ENCODE measurements at regions of chr1 and their contacts with region 1.

Region 1: GRCh38 chr1:76154206-76154956 is 79.8 kb downstream of the ST6GALNAC3 start:
- DNase-seq: peak; percentile 90
- H3K4me3 Mint-ChIP-seq: peak overlapping the region; percentile 72
- H3K27ac Mint-ChIP-seq: peak overlapping the region; percentile 67
- H3K4me1 Mint-ChIP-seq: peaks cover 12% of the 10 kb centered on the region
- H3K27me3 Mint-ChIP-seq: no peaks in the 10 kb centered on the region

Region 2: DNA sequence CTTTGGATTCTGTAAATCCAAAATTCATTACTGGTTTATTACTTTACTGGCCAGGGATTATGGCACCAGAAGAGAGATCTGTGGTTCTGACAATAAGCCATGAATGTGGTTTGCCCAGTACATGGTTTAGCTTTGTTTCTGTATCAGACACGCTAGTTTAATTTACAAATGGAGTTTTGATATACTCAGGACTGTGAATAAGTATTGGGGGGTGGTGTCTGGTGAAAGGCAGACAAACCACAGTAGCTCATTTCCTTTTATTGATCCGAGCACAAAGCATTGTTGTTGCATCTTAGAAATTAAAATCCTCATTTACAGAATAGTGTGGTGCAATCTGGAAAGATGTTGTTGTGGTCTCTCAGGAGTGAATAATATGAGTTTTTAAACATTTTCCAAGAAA is 16.1 kb after region 1 on chr1:
- CTCF ChIA-PET with region 1: interaction called, 12 read pairs
- intact Hi-C with region 1: no loop called
- DNase-seq: no peak
- H3K4me3 Mint-ChIP-seq: no peak overlapping the region
- H3K27ac Mint-ChIP-seq: no peak overlapping the region
- H3K4me1 Mint-ChIP-seq: peaks cover 12% of the 10 kb centered on the region
- H3K27me3 Mint-ChIP-seq: no peaks in the 10 kb centered on the region

Region 3: GRCh38 chr1:76294482-76295194 is 140.3 kb after region 1 on chr1:
- CTCF ChIA-PET with region 1: interaction called, 7 read pairs
- intact Hi-C with region 1: loop called (anchors 1 kb)
- DNase-seq: peak; percentile 30
- H3K4me3 Mint-ChIP-seq: peak overlapping the region; percentile 49
- H3K27ac Mint-ChIP-seq: peak overlapping the region; percentile 73
- H3K4me1 Mint-ChIP-seq: peaks cover 76% of the 10 kb centered on the region
- H3K27me3 Mint-ChIP-seq: no peaks in the 10 kb centered on the region

Region 4: DNA sequence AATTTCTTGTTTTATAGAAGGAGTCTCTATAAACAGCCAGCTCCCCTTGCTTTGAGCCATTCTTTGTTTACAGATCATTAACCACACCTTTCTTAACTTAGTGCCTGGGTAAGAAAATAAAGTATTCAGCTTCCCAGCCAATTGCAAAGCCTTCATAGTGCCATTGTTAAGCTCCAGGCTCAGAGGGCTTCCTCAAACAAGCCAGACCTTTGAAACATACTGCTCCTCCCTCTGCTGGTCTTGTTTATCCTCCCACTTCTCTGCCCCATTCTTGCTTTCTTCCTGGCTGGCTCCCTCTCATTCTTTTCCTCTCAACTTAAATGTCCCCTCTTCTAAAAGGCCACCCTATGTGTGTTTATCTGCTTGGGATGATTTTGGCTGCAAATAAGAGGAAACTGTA is 393.5 kb after region 1 on chr1:
- CTCF ChIA-PET with region 1: no interaction called
- intact Hi-C with region 1: loop called (anchors 1 kb)
- DNase-seq: no peak
- H3K4me3 Mint-ChIP-seq: no peak overlapping the region
- H3K27ac Mint-ChIP-seq: no peak overlapping the region
- H3K4me1 Mint-ChIP-seq: no peaks in the 10 kb centered on the region
- H3K27me3 Mint-ChIP-seq: no peaks in the 10 kb centered on the region

Region 5: DNA sequence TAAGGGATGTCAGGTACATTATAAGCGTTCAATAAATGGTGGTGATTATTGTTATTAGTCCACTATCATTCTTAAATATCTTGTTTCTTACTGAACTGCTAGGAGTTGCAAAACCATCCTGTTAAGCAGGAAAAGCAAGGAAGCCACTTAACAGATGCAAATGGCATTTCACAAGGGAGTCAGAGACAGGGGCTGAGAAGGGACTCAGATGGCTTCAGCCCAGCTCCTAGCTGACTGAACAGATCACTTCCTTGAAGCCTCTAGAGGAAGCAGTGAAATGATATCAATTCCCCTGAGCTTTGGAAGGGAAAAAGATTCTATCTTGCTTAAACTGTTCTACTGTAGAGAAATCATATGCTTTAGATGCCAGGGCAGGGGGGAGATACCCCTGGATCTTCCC is 864.4 kb after region 1 on chr1:
- CTCF ChIA-PET with region 1: interaction called, 4 read pairs
- intact Hi-C with region 1: loop called (anchors 5 kb)
- DNase-seq: no peak
- H3K4me3 Mint-ChIP-seq: no peak overlapping the region
- H3K27ac Mint-ChIP-seq: no peak overlapping the region
- H3K4me1 Mint-ChIP-seq: no peaks in the 10 kb centered on the region
- H3K27me3 Mint-ChIP-seq: no peaks in the 10 kb centered on the region

Region 6: DNA sequence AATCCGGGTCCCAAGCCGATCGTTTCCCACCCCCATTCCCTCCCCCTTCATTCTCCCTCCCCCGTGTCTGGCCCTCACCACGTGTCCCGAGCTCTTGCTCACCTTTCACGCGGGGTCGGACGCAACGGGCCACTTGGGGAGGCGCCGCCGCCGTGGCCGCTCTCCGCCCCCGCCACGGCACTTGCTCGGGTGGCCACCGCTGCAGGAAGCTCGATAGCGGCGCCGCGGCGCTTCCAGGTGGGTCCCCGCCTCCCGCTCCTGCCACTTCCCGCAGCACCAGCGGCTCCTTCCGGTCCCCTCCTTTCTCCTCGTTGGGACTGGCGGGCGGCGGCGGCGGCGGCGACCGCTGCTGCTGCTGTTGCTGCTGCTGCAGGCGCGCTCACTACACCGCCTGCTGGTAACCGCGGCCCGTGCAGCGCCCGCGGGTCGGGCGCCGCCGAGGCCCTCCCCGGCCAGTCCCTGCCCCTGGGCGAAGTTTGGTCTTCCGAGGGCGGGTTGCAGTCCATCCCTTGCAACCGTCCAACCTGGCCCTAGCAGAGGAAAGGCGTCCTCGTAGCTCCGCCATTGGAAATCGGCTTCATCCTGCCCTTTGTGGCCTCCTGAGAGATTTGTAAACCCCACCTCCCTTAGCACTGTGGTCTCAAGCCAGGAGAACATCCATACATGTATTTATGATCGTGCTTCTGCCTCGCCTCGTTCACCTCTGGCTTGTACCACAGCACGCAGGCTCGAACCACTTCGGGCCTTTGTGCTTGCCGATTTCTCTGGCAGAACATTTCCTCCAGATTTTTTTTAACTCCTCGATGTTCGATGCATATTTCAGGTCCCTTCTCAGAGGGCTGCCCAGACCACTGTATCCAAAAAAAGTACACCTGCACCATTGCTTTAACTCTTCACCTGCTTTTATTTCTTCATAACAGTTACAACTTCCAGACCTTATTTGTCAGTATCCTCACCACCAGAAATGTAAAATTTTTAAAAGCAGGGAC is 1529.1 kb after region 1 on chr1:
- CTCF ChIA-PET with region 1: no interaction called
- intact Hi-C with region 1: loop called (anchors 1 kb)
- DNase-seq: peak; percentile 94
- H3K4me3 Mint-ChIP-seq: peak overlapping the region; percentile 82
- H3K27ac Mint-ChIP-seq: peak overlapping the region; percentile 90
- H3K4me1 Mint-ChIP-seq: peaks cover 30% of the 10 kb centered on the region
- H3K27me3 Mint-ChIP-seq: no peaks in the 10 kb centered on the region